Activated T-helper 2 cell treated with anti-CD3 and anti-CD28 coated beads, Interferon-gamma antibody, Interleukin-2, Interleukin-4, amounts not matched to agents 10 μg/mL and 5 μg/mL and 100 μg/mL, durations not matched to agents 14 hours and 24 hours and 36 hours (primary cell): ENCODE measurements at regions of chr4 and their contacts with region 1.

Region 1: DNA sequence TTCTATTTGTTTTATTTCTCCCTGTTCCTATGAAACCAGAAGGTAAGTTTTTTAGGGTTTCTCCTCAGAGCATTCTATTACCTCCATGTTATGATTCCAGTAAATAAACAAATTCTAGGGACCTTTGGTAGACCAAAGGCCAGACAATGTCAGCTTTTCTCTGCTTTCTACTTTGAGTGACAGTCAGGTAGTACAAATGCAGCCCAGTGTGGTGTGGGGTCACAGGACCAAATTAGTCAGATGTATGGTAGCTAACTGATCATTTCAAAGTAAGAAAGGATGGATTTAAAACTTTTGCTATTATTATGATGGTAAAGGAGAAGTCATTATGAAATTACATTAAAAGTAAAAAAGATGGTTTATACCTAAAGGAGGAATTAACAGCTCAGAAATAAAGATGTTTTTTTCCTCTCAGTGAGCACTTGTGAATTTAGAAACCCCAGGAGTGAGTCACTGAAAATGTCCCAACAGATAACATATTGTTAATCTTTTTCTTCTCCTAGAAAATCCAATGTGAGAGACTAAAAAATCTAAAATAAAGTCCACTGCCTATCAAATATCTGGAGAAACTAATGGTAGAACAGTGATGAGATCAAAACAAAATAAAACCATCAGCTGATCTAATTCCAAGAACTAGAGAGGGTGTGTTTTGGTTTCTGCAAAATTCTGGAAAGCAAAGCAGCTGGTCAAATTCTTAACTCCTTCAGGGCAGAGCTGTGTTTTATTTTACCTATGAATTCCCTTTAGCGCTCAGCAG is 16.6 kb upstream of the KLHL2 start:
- DNase-seq: no peak
- H3K4me3 Mint-ChIP-seq: no peak overlapping the region
- H3K27ac Mint-ChIP-seq: peak overlapping the region; percentile 51
- H3K4me1 Mint-ChIP-seq: peaks cover 30% of the 10 kb centered on the region
- H3K27me3 Mint-ChIP-seq: no peaks in the 10 kb centered on the region

Region 2: GRCh38 chr4:165077034-165077578 is 113.7 kb before region 1 on chr4:
- intact Hi-C with region 1: no loop called
- DNase-seq: no peak
- H3K4me3 Mint-ChIP-seq: no peak overlapping the region
- H3K27ac Mint-ChIP-seq: no peak overlapping the region
- H3K4me1 Mint-ChIP-seq: no peaks in the 10 kb centered on the region
- H3K27me3 Mint-ChIP-seq: no peaks in the 10 kb centered on the region

Region 3: DNA sequence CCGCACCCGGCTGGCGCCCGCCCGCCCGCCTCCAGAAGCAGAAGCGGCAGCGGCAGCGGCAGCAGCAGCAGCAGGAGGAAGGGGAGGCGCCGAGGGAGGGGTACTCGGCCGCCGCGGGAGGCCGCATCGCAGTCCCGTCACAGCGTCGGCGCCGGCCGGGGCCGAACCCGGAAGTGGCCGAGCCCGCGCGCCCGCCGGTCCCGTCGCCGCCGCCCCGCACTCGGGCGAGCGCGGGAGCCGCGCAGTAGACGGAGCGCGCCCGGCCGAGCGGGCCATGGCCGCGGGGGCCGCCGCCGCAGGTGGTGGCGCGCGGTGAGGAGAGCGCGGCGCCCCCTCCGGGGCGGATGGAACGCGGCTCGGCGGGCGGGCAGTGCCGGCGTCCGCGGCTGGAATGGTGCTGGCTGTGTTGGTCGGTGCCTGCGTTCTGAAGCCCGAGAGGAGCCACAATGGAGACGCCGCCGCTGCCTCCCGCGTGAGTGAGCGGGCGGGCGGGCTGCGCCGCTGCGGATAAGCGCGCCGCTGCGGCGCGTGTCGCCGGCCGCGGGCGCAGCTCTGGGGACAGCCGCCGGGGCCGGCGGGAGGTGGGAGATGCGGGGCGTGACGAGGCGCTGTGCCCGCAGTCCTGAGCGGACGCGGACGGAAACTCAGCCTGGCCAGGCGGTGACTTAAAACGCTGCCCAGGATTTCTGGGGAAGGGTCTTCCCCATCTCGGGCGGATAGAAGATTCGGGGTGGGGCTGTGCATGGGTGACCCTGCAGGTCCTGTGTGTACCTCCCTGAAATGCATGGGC is 16.9 kb after region 1 on chr4 and contains the start of gene KLHL2:
- intact Hi-C with region 1: loop called (anchors 1 kb)
- DNase-seq: peak; percentile 72
- H3K4me3 Mint-ChIP-seq: peak within 1 kb of the TSS; percentile 88
- H3K27ac Mint-ChIP-seq: peak within 1 kb of the TSS; percentile 80
- H3K4me1 Mint-ChIP-seq: peaks cover 68% of the 10 kb centered on the region
- H3K27me3 Mint-ChIP-seq: no peaks in the 10 kb centered on the region
- total RNA-seq, gene KLHL2: 30.3 and 32.3 TPM in 2 replicates

Region 4: GRCh38 chr4:165394275-165394674 is 203.5 kb after region 1 on chr4:
- intact Hi-C with region 1: no loop called
- DNase-seq: no peak
- H3K4me3 Mint-ChIP-seq: no peak overlapping the region
- H3K27ac Mint-ChIP-seq: no peak overlapping the region
- H3K4me1 Mint-ChIP-seq: no peaks in the 10 kb centered on the region
- H3K27me3 Mint-ChIP-seq: peaks cover 11% of the 10 kb centered on the region